IMR-90 (cell line): ENCODE measurements at regions of chr7 and their contacts with region 1.

Region 1: DNA sequence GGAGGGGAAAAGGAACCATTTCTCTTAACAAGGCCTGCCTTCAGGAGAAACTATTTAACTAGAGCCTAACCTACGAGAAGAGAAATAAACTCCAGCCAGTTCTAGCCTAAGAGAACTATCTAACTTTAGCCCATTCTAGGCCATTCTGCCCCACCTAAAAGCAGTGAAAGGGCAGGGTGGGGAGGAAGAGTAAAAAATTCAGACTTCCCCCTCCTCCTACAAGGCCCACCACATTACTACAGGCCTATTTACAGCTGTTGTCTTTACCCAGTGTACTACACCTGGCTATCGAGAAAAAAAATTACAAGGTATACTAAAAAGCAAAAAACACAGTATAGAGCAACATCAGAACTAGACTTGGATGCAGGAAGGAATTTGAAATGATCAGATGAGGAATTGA is 93.0 kb downstream of the KMT2C start:
- DNase-seq: no peak
- ATAC-seq: no peak
- H3K4me3 ChIP-seq: no peak overlapping the region
- H3K27ac ChIP-seq: no peak overlapping the region
- H3K4me1 ChIP-seq: peaks cover 2% of the 10 kb centered on the region; the same call in 1 of the 2 replicates
- H3K27me3 ChIP-seq: no peaks in the 10 kb centered on the region
- CTCF ChIP-seq: no peak
- POLR2A ChIP-seq: no peak
- RAD21 ChIP-seq: no peak

Region 2: GRCh38 chr7:152313831-152314604 is 28.8 kb before region 1 on chr7:
- CTCF ChIA-PET with region 1: no interaction called
- POLR2A ChIA-PET with region 1: interaction called, 15 read pairs
- dilution Hi-C with region 1: no loop called
- in situ Hi-C with region 1: no loop called
- intact Hi-C with region 1: no loop called
- DNase-seq: peak; percentile 79
- ATAC-seq: peak; percentile 40
- H3K4me3 ChIP-seq: no peak overlapping the region
- H3K27ac ChIP-seq: no peak overlapping the region
- H3K4me1 ChIP-seq: no peaks in the 10 kb centered on the region
- H3K27me3 ChIP-seq: no peaks in the 10 kb centered on the region
- CTCF ChIP-seq: no peak
- POLR2A ChIP-seq: no peak
- RAD21 ChIP-seq: no peak

Region 3: GRCh38 chr7:152330827-152331226 is 12.0 kb before region 1 on chr7:
- CTCF ChIA-PET with region 1: no interaction called
- POLR2A ChIA-PET with region 1: no interaction called
- dilution Hi-C with region 1: no loop called
- in situ Hi-C with region 1: no loop called
- intact Hi-C with region 1: no loop called
- DNase-seq: no peak
- ATAC-seq: peak; percentile 44; the same call in 1 of the 2 replicates
- H3K4me3 ChIP-seq: no peak overlapping the region
- H3K27ac ChIP-seq: no peak overlapping the region
- H3K4me1 ChIP-seq: peaks cover 2% of the 10 kb centered on the region; the same call in 1 of the 2 replicates
- H3K27me3 ChIP-seq: no peaks in the 10 kb centered on the region
- CTCF ChIP-seq: no peak
- POLR2A ChIP-seq: no peak
- RAD21 ChIP-seq: no peak

Region 4: DNA sequence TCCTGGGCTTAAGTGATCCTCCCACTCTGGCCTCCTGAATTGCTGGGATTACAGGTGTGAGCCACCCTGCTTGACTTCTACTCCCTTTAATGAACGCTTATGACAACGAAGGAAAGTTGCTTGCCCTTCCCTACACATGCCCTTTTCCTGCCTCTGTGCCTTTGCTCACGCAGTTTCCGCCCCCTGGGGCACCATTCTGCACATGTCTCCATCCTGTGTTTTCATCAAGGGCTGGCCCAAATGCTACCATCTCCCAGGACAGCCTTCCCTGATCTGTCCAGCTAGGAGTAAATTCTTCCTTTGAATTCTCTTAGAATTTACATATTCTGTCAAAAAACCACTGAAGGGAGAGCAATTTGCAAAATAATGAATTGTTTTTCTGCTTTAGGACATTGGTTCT is 143.0 kb after region 1 on chr7:
- CTCF ChIA-PET with region 1: no interaction called
- POLR2A ChIA-PET with region 1: no interaction called
- dilution Hi-C with region 1: no loop called
- in situ Hi-C with region 1: no loop called
- intact Hi-C with region 1: no loop called
- DNase-seq: no peak
- ATAC-seq: no peak
- H3K4me3 ChIP-seq: no peak overlapping the region
- H3K27ac ChIP-seq: no peak overlapping the region
- H3K4me1 ChIP-seq: no peaks in the 10 kb centered on the region
- H3K27me3 ChIP-seq: no peaks in the 10 kb centered on the region
- CTCF ChIP-seq: no peak
- POLR2A ChIP-seq: no peak
- RAD21 ChIP-seq: no peak